Activated B cell treated with CpG ODN at 0.5 μM for 24 hours (primary cell): ENCODE measurements at regions of chr13 and their contacts with region 1.

Region 1: DNA sequence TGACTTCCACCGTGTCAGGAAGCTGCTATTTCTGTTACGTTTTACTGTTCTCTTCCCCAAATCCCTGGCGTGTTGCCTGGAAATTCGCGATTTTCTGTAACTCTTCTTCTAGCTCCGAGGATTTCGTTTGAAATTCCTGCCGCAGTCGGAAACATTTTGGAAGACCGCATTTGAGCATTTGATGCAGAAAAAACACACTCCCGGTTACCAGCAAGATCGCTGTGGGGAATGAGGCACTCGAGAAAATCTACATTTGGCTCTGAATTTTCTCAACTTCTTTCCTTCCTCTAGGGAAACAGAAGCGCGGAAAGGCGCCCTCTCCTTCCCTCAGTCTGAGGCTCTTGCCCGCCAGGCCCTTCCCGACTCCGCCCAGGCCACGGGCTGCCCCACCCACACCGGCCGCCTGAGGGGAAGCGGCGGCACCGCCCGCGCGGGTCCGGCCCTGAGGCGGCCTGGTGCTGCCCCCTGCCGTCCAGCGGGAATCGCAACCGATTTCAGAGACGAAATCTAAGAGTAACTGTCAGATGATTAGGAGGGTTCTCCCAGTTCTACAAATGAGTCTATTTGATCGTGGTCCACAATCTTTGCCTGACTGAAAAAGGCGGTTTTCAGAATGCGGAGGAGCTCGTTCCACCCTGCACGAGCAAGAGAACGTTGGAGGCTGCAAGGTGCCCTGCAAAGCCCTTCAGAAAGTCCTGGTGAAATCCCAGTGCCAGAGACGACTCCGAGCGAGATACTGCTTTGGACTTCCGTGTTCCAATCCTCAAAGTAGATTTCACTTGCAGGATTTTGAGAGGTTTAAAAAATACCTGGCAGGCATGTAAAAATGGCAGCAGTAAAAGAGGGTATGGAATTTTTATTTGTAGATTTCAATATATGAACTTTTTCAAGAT is 18.4 kb upstream of the TUBGCP3 start:
- DNase-seq: peak; percentile 87
- ATAC-seq: peak; percentile 100
- H3K4me3 Mint-ChIP-seq: peak overlapping the region; percentile 80
- H3K27ac Mint-ChIP-seq: no peak overlapping the region
- H3K4me1 Mint-ChIP-seq: peaks cover 10% of the 10 kb centered on the region
- H3K27me3 Mint-ChIP-seq: peaks cover 21% of the 10 kb centered on the region
- CTCF ChIP-seq: peak; percentile 57

Region 2: GRCh38 chr13:110944121-110944967 is 1662.0 kb before region 1 on chr13:
- CTCF ChIA-PET with region 1: no interaction called
- POLR2A ChIA-PET with region 1: no interaction called
- intact Hi-C with region 1: loop called (anchors 10 kb)
- DNase-seq: no peak
- ATAC-seq: peak; percentile 43
- H3K4me3 Mint-ChIP-seq: no peak overlapping the region
- H3K27ac Mint-ChIP-seq: no peak overlapping the region
- H3K4me1 Mint-ChIP-seq: peaks cover 25% of the 10 kb centered on the region
- H3K27me3 Mint-ChIP-seq: peaks cover 1% of the 10 kb centered on the region
- CTCF ChIP-seq: no peak

Region 3: GRCh38 chr13:111066544-111066943 is 1539.8 kb before region 1 on chr13:
- CTCF ChIA-PET with region 1: no interaction called
- POLR2A ChIA-PET with region 1: no interaction called
- intact Hi-C with region 1: loop called (anchors 5 kb)
- DNase-seq: no peak
- ATAC-seq: no peak
- H3K4me3 Mint-ChIP-seq: peak overlapping the region; percentile 67
- H3K27ac Mint-ChIP-seq: no peak overlapping the region
- H3K4me1 Mint-ChIP-seq: peaks cover 10% of the 10 kb centered on the region
- H3K27me3 Mint-ChIP-seq: peaks cover 33% of the 10 kb centered on the region
- CTCF ChIP-seq: no peak

Region 4: DNA sequence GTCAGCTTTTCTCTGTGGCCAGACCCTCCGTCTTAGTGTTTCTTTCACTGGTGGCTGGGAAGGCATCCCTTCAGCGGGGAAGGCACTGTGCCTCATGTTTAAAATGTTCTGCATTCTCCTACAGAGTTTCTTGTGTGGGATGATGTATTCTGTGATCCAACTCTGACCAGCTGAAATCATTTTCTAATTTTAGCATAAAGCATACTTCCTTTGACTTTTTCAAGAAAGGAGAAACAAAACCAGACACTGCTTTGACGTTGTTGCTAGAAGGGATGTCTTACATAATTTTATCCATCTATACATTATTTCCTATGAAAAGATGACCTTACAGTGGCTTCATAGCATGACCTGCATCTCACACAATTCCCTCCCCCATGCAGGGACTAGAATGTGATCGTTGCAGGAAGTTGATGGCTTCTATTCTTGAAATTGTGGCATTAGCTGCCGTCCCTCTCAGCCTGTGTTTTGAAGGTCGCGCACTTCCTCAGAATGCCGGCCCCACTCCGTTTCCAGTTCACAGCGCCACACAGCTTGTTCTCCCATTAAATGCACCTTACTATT is 1324.5 kb before region 1 on chr13:
- CTCF ChIA-PET with region 1: no interaction called
- POLR2A ChIA-PET with region 1: no interaction called
- intact Hi-C with region 1: loop called (anchors 10 kb)
- DNase-seq: no peak
- ATAC-seq: no peak
- H3K4me3 Mint-ChIP-seq: no peak overlapping the region
- H3K27ac Mint-ChIP-seq: no peak overlapping the region
- H3K4me1 Mint-ChIP-seq: no peaks in the 10 kb centered on the region
- H3K27me3 Mint-ChIP-seq: no peaks in the 10 kb centered on the region
- CTCF ChIP-seq: no peak

Region 5: GRCh38 chr13:112003396-112003795 is 603.0 kb before region 1 on chr13:
- CTCF ChIA-PET with region 1: no interaction called
- POLR2A ChIA-PET with region 1: no interaction called
- intact Hi-C with region 1: no loop called
- DNase-seq: no peak
- ATAC-seq: no peak
- H3K4me3 Mint-ChIP-seq: no peak overlapping the region
- H3K27ac Mint-ChIP-seq: no peak overlapping the region
- H3K4me1 Mint-ChIP-seq: no peaks in the 10 kb centered on the region
- H3K27me3 Mint-ChIP-seq: no peaks in the 10 kb centered on the region
- CTCF ChIP-seq: no peak

Region 6: DNA sequence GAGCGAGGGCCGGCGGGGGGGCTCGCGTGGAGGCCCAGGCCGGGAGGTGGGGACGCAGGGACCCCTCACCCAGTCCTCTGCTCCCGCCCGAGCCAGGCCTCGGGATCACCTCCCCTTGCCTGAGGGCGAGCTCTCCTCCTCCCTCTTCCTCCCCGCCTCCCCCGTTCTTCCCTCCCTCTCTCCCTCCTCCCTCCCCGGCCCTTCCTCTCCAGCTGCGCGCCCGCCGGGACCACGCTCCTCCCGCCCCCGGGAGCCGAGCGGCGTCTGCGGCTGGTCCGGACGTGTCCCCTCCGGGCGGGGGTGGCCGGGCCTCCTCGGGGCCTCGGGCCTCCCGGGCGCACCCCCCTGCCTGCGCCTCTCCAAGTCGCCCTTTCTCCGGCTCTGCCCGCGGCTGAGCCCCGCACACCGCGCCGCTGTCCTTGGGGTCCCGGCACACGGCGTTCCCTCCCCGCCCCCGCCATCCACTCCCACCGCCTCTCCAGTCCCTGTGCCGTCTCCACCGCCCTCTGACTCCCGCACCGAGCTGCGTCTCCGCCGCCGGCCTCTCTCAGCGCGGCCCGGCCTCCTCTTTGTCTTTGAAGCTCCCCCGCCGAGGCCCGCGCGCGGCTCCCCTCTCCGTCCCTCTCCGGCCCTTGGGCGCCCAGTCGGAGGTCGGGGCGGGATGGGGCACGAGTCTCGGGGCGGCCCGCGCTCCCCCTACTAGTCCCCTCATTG is 533.7 kb before region 1 on chr13:
- CTCF ChIA-PET with region 1: no interaction called
- POLR2A ChIA-PET with region 1: no interaction called
- intact Hi-C with region 1: loop called (anchors 10 kb)
- DNase-seq: no peak
- ATAC-seq: no peak
- H3K4me3 Mint-ChIP-seq: no peak overlapping the region
- H3K27ac Mint-ChIP-seq: no peak overlapping the region
- H3K4me1 Mint-ChIP-seq: peaks cover 3% of the 10 kb centered on the region
- H3K27me3 Mint-ChIP-seq: peaks cover 52% of the 10 kb centered on the region
- CTCF ChIP-seq: no peak

Region 7: GRCh38 chr13:112510002-112510780 is 96.2 kb before region 1 on chr13:
- CTCF ChIA-PET with region 1: no interaction called
- POLR2A ChIA-PET with region 1: no interaction called
- intact Hi-C with region 1: loop called (anchors 2 kb)
- DNase-seq: no peak
- ATAC-seq: no peak
- H3K4me3 Mint-ChIP-seq: no peak overlapping the region
- H3K27ac Mint-ChIP-seq: no peak overlapping the region
- H3K4me1 Mint-ChIP-seq: no peaks in the 10 kb centered on the region
- H3K27me3 Mint-ChIP-seq: no peaks in the 10 kb centered on the region
- CTCF ChIP-seq: no peak

Region 8: DNA sequence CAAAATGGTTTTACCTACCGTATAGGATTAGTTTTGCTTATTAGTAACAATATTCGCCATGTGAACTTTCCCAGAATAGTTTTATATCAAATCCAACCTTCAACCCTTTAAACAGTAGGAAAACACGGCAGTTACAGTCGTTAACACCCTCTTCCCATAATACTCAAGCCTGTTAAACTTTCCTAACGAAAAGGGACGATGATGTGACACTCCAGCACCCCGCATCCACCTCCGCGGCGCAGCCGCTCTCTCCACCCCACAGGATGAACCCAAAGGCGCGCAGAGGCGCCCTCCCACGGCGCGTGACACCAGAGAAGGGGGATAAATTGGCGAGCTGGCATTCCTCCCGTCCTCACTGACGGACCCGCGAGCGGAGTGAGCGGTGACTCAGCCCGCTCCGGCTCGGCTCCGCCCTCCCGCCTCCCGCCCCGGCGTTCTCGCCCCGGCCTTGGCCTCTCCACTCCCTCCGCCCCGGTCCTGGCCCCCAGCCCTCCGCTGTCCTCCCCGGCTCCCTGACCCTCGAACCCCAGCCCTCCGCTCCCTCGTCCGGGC is 19.1 kb before region 1 on chr13:
- CTCF ChIA-PET with region 1: interaction called, 6 read pairs
- POLR2A ChIA-PET with region 1: interaction called, 5 read pairs
- intact Hi-C with region 1: loop called (anchors 1 kb)
- DNase-seq: peak; percentile 58
- ATAC-seq: peak; percentile 59
- H3K4me3 Mint-ChIP-seq: peak overlapping the region; percentile 94
- H3K27ac Mint-ChIP-seq: peak overlapping the region; percentile 84
- H3K4me1 Mint-ChIP-seq: peaks cover 44% of the 10 kb centered on the region
- H3K27me3 Mint-ChIP-seq: peaks cover 4% of the 10 kb centered on the region
- CTCF ChIP-seq: no peak

Region 9: GRCh38 chr13:112669881-112670499 is 63.6 kb after region 1 on chr13:
- CTCF ChIA-PET with region 1: no interaction called
- POLR2A ChIA-PET with region 1: no interaction called
- intact Hi-C with region 1: no loop called
- DNase-seq: no peak
- ATAC-seq: no peak
- H3K4me3 Mint-ChIP-seq: no peak overlapping the region
- H3K27ac Mint-ChIP-seq: no peak overlapping the region
- H3K4me1 Mint-ChIP-seq: no peaks in the 10 kb centered on the region
- H3K27me3 Mint-ChIP-seq: peaks cover 7% of the 10 kb centered on the region
- CTCF ChIP-seq: no peak